Right ventricle myocardium inferior (tissue), 1 donor: ENCODE measurements at regions of chr11 and their contacts with region 1.

Region 1: GRCh38 chr11:31958076-31958735 is 132.7 kb upstream of the RCN1 start:
- DNase-seq: peak; percentile 78
- ATAC-seq: peak; percentile 85

Region 2: GRCh38 chr11:31240338-31240904 is 717.8 kb before region 1 on chr11:
- intact Hi-C with region 1: loop called (anchors 2 kb)
- DNase-seq: no peak
- ATAC-seq: no peak

Region 3: DNA sequence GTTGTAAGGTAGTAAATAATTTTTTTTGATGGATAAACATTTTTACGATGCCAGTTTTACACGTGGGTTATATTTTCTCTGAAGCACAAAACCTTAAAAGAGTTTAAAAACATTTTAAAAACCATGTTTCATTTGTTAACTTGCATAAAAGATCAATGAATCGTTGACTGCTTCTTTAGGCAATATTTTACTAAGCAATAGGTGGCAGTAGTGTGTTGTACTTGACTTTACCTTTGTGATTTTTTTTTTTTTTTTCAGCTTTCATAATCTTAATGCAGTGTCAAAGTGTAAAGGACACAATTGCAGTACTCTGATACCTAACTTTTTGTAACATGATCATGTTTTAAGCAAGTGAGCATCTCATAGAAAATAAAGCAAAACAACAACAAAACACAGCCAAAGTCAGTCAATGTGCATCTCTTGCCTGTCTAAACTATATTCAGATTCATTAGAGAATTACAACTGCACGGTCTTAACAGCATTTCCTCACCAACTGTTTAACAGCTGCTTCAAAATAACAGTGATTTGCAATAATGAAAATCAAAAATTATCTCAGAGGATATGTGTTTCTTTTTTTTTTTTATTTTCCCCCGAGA is 560.9 kb before region 1 on chr11:
- intact Hi-C with region 1: loop called (anchors 5 kb)
- DNase-seq: no peak
- ATAC-seq: no peak

Region 4: DNA sequence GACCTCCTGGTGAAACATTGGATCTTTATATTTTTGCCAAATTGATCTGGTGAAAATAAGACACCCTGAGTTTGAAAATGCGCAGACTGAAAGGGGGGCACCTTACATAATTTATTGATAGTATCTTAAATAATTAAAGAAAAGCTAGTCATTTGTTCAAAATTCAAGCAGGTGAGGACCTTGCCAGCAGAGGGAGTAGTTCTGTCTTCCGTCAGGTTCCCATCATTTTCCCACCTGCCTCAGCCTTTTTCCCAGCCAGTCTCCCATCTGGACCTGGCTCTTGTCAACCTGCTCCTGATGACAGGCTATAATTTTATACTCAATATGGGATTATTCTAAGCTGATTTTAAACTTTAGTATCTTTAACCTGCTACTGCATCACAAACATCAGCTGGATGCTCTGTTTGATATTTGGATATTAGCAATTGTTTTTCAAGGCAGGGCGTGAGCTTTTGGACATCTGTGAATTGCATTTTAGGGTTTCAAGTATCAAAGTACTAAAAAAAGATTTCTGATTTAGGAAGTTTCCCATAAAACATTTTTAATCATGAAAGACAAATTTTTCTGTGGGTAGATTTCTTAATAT is 316.6 kb before region 1 on chr11:
- intact Hi-C with region 1: loop called (anchors 5 kb)
- DNase-seq: no peak
- ATAC-seq: no peak

Region 5: GRCh38 chr11:31932879-31933278 is 25.3 kb before region 1 on chr11:
- intact Hi-C with region 1: no loop called
- DNase-seq: no peak
- ATAC-seq: peak; percentile 56